Kidney (tissue), 22 donors: ENCODE measurements at regions of chr9 and their contacts with region 1.

Region 1: GRCh38 chr9:129317179-129318011 is 139.3 kb upstream of the IER5L start:
- DNase-seq: peak in 3 of 5 donors; percentile 63 to 80 (median 63)
- H3K4me3 ChIP-seq: no peak overlapping the region
- H3K27ac ChIP-seq: peak overlapping the region; percentile 13 to 57
- H3K4me1 ChIP-seq: peaks cover 0 to 28% (median 15%) of the 10 kb centered on the region in 3 donors
- H3K27me3 ChIP-seq: no peaks in the 10 kb centered on the region
- CTCF ChIP-seq: no peak

Region 2: GRCh38 chr9:129182625-129183495 is 134.5 kb before region 1 on chr9:
- intact Hi-C with region 1: loop called (anchors 10 kb)
- DNase-seq: peak in 1 of 5 donors; percentile 65
- H3K4me3 ChIP-seq: no peak overlapping the region
- H3K27ac ChIP-seq: peak overlapping the region in 1 of 2 donors; percentile 57
- H3K4me1 ChIP-seq: peaks cover 3 to 26% (median 15%) of the 10 kb centered on the region in 3 donors
- H3K27me3 ChIP-seq: no peaks in the 10 kb centered on the region
- CTCF ChIP-seq: peak; percentile 14

Region 3: GRCh38 chr9:129258124-129258822 is 59.1 kb before region 1 on chr9:
- intact Hi-C with region 1: no loop called
- DNase-seq: peak; percentile 92 to 98 (median 97)
- H3K4me3 ChIP-seq: peak overlapping the region; percentile 19 to 37 (median 25)
- H3K27ac ChIP-seq: no peak overlapping the region
- H3K4me1 ChIP-seq: peaks cover 0 to 12% (median 0%) of the 10 kb centered on the region in 3 donors
- H3K27me3 ChIP-seq: no peaks in the 10 kb centered on the region
- CTCF ChIP-seq: no peak